Endothelial cell of umbilical vein (primary cell): ENCODE measurements at regions of chr2 and their contacts with region 1.

Region 1: DNA sequence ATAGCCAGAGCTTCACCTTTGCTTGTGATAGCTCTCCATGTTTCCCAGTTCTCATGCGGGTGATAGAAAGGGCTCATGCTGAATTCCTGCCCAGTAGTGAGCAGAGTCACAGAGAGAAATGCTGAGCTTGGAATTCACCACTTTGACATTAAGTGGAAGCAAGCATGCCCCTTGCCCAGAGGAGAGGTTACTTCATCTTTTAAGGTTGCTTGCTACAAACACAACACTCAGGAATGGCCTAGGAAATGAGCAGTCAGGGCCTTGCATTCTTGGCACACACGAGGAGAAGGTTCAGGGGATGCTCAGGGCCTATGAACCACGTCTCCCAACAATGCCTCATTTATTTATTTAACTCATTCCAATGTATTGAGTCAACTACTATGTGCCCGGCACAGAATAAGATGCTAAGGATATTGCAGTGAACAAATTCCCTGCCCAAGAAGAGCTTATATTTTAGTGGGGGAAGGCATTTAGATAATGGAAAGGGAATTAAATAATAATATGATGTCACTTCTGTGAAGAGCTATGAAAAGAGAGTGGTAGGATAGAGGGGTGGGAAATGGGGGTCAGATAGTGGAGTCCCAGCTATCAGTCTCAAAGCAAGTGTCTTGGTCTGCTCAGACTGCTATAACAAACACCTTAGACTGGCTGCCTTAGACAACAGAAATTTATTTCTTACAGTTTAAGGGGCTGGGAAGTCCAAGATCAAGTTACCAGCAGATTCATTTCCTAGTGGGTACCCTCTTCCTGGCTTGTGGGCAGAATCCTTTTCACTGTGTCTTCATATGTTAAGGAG is 42.1 kb downstream of the DDX18 start:
- DNase-seq: peak; percentile 88
- H3K4me3 ChIP-seq: no peak overlapping the region
- H3K27ac ChIP-seq: peak overlapping the region; percentile 73
- H3K4me1 ChIP-seq: peaks cover 22% of the 10 kb centered on the region
- H3K27me3 ChIP-seq: peaks cover 7 to 12% of the 10 kb centered on the region in 2 experiments
- CTCF ChIP-seq: no peak
- POLR2A ChIP-seq: peak; percentile 4

Region 2: GRCh38 chr2:117917223-117917917 is 60.8 kb after region 1 on chr2:
- CTCF ChIA-PET with region 1: no interaction called
- POLR2A ChIA-PET with region 1: no interaction called
- dilution Hi-C with region 1: no loop called
- intact Hi-C with region 1: loop called (anchors 5 kb)
- DNase-seq: no peak
- H3K4me3 ChIP-seq: no peak overlapping the region
- H3K27ac ChIP-seq: no peak overlapping the region
- H3K4me1 ChIP-seq: no peaks in the 10 kb centered on the region
- H3K27me3 ChIP-seq: no peaks in the 10 kb centered on the region
- CTCF ChIP-seq: no peak
- POLR2A ChIP-seq: no peak

Region 3: DNA sequence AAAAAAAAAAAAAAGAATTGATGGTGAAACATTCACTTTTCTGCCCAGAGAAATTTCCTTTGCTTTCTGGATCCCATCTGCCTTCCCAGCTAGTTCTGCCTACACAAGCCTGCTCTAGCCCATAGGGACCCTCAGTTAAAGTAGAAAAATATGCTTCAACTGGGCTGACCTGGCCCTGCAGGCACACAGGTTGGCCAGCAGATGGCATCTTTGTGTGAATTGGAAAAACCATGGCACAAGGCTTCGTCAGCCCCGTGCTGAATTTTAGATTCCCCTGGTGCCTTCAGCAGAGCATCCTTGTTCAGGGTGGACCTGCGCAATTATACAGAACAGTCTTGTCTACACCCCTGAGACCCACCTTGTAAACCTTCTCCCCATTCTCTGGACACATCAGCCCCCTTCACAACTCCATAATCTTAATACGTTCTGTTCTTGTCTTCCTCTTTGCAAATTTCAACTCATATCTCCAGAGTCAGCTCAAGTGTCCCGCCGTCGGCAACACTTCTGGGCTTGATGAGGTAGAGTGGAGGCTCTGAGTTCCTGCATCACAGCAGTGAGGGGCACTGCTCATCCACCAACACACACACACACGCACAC is 346.2 kb after region 1 on chr2:
- CTCF ChIA-PET with region 1: no interaction called
- POLR2A ChIA-PET with region 1: no interaction called
- dilution Hi-C with region 1: no loop called
- intact Hi-C with region 1: no loop called
- DNase-seq: peak; percentile 43
- H3K4me3 ChIP-seq: no peak overlapping the region
- H3K27ac ChIP-seq: no peak overlapping the region
- H3K4me1 ChIP-seq: no peaks in the 10 kb centered on the region
- H3K27me3 ChIP-seq: peaks cover 2 to 11% of the 10 kb centered on the region in 2 experiments
- CTCF ChIP-seq: peak; percentile 86 to 92
- POLR2A ChIP-seq: no peak